ENCODE measurements at regions of chr5 and their contacts with region 1.

Region 1: DNA sequence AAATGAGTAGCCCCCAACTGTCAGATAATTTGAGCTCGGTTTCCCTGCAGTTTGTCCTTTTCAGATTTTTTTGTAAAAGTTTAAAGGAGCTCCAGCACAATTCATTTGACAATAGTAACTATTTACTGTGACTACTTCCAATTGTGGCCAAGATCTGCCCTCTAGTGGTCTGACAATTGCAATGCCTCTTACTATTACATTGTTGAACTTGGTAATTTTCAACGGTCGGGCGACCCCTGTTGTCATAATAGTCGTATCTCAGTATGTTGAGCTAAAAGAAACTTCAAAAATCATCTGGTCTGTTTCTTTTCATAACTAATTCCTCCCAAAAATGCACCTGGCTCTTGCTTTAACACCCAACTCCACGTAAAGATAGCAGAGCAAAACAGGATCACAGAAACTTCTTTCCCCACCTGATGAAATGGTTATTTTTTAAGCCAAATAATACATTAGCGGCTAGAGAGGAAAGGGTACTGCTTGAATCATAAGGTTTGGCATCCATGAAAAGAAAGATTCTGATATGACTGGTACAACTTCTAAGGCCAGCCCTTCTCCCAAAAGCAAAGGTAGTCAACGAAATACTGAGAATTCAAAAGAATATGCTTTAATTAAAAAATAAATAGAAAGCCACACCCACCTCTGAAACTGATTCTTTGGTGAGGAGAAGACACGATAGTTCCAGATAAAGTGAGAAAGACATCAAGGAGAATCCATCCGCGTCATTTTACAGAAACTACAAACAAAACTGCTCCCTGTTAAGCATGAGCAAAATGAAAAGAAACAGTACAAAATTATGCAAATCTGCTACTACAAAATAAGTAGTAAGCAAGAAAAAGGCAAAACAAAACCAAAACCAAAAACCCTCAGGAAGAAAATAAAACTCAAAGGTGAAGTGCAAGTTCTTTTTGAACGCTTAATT is 76.9 kb upstream of the HTR4 start:
- DNase-seq: no peak
- ATAC-seq: peak; percentile 96
- H3K4me3 Mint-ChIP-seq: peak overlapping the region; percentile 72
- H3K27ac Mint-ChIP-seq: peak overlapping the region; percentile 59
- H3K4me1 Mint-ChIP-seq: peaks cover 8% of the 10 kb centered on the region
- H3K27me3 Mint-ChIP-seq: peaks cover 5% of the 10 kb centered on the region
- CTCF ChIP-seq: peak; percentile 31

Region 2: DNA sequence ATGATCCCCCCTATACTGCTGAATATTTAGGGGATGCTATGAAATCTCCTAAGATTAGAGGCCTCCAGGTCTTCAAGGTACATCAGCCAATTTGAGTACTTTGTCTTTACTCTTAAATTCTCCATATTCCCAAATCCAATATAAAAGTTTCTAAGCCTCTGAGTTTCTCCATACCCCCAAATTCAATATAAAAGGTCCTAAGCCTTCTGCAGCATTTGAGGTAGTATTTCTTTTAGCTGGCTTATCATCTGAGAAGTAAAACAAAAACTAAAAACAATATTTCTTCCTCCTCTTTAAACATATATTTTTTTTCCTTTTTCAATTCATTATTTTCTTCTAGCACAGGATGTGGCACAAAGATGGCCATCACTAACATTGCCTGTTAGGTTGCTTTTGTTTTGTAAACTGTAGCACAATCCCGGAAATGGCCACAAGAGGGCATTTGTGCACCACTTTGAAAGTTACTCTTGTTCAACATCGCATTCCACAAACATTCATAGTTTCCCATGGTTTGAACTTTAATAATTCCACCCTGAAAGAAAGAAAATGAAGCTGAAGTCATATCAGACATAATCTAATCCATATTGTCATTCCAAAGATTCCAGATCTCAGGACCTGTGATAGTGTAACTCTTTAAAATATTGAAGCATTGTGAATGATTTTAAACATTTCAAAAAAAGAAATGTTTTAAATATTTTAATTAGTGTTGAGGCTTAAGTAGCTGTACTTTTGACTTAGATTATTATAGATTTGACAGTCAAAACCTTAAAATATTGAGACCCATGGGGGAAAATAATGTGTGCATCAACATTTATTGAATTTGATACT is 873.7 kb before region 1 on chr5:
- CTCF ChIA-PET with region 1: no interaction called
- POLR2A ChIA-PET with region 1: no interaction called
- intact Hi-C with region 1: loop called (anchors 2 kb)
- DNase-seq: no peak
- ATAC-seq: no peak
- H3K4me3 Mint-ChIP-seq: no peak overlapping the region
- H3K27ac Mint-ChIP-seq: no peak overlapping the region
- H3K4me1 Mint-ChIP-seq: no peaks in the 10 kb centered on the region
- H3K27me3 Mint-ChIP-seq: no peaks in the 10 kb centered on the region
- CTCF ChIP-seq: peak; percentile 61

Region 3: GRCh38 chr5:148237785-148238184 is 493.4 kb before region 1 on chr5:
- CTCF ChIA-PET with region 1: no interaction called
- POLR2A ChIA-PET with region 1: no interaction called
- intact Hi-C with region 1: no loop called
- DNase-seq: no peak
- ATAC-seq: no peak
- H3K4me3 Mint-ChIP-seq: no peak overlapping the region
- H3K27ac Mint-ChIP-seq: no peak overlapping the region
- H3K4me1 Mint-ChIP-seq: no peaks in the 10 kb centered on the region
- H3K27me3 Mint-ChIP-seq: no peaks in the 10 kb centered on the region
- CTCF ChIP-seq: no peak

Region 4: DNA sequence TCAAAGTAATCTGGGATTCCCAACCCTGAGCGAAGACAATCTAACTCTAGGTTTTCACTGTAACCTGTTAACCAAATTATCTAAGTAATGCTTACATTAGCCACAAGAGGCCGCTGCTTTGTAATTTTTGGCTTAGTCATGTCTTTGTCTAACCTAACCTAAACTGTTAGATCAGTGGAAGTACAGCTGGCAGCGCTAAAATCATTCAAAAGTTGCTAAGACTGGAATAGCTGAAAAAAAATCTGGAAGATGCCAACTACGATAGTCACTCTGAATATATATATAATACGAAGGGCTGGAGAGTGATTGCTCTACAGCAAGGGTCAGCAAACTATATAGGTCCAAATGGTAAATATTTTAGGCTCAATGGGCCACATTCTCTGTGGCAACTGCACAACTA is 287.2 kb before region 1 on chr5:
- CTCF ChIA-PET with region 1: interaction called, 7 read pairs
- POLR2A ChIA-PET with region 1: no interaction called
- intact Hi-C with region 1: loop called (anchors 1 kb)
- DNase-seq: no peak
- ATAC-seq: peak; percentile 67
- H3K4me3 Mint-ChIP-seq: no peak overlapping the region
- H3K27ac Mint-ChIP-seq: no peak overlapping the region
- H3K4me1 Mint-ChIP-seq: no peaks in the 10 kb centered on the region
- H3K27me3 Mint-ChIP-seq: no peaks in the 10 kb centered on the region
- CTCF ChIP-seq: no peak

Region 5: GRCh38 chr5:148776780-148777179 is 45.6 kb after region 1 on chr5:
- CTCF ChIA-PET with region 1: no interaction called
- POLR2A ChIA-PET with region 1: no interaction called
- intact Hi-C with region 1: no loop called
- DNase-seq: no peak
- ATAC-seq: peak; percentile 54
- H3K4me3 Mint-ChIP-seq: no peak overlapping the region
- H3K27ac Mint-ChIP-seq: no peak overlapping the region
- H3K4me1 Mint-ChIP-seq: peaks cover 14% of the 10 kb centered on the region
- H3K27me3 Mint-ChIP-seq: peaks cover 2% of the 10 kb centered on the region
- CTCF ChIP-seq: no peak

Region 6: GRCh38 chr5:148991606-148992005 is 260.4 kb after region 1 on chr5:
- CTCF ChIA-PET with region 1: interaction called, 118 read pairs
- POLR2A ChIA-PET with region 1: no interaction called
- intact Hi-C with region 1: no loop called
- DNase-seq: no peak
- ATAC-seq: no peak
- H3K4me3 Mint-ChIP-seq: no peak overlapping the region
- H3K27ac Mint-ChIP-seq: no peak overlapping the region
- H3K4me1 Mint-ChIP-seq: no peaks in the 10 kb centered on the region
- H3K27me3 Mint-ChIP-seq: peaks cover 20% of the 10 kb centered on the region
- CTCF ChIP-seq: no peak

Region 7: DNA sequence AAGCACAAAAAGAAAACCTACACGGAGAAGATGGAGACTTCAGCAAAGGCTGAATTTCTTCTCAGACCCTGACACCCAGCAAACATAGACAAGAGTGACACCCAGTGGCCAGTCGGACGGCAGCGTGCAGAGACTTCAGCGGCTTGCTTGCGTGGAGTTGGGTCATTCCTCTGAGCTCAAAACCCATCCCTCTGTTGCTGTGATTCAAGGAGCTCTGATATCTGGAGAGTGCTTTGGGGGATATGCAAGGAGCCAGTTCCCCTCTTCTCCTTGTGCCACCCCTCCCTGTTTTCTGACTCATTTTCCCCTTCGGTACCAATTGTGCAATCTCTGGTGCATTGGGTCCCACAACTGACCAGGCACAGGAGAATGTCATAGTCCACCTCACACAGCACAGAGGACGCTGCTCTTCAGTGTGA is 304.2 kb after region 1 on chr5:
- CTCF ChIA-PET with region 1: interaction called, 275 read pairs
- POLR2A ChIA-PET with region 1: no interaction called
- intact Hi-C with region 1: loop called (anchors 1 kb)
- DNase-seq: peak; percentile 30
- ATAC-seq: peak; percentile 79
- H3K4me3 Mint-ChIP-seq: no peak overlapping the region
- H3K27ac Mint-ChIP-seq: no peak overlapping the region
- H3K4me1 Mint-ChIP-seq: no peaks in the 10 kb centered on the region
- H3K27me3 Mint-ChIP-seq: peaks cover 16% of the 10 kb centered on the region
- CTCF ChIP-seq: no peak

Region 8: DNA sequence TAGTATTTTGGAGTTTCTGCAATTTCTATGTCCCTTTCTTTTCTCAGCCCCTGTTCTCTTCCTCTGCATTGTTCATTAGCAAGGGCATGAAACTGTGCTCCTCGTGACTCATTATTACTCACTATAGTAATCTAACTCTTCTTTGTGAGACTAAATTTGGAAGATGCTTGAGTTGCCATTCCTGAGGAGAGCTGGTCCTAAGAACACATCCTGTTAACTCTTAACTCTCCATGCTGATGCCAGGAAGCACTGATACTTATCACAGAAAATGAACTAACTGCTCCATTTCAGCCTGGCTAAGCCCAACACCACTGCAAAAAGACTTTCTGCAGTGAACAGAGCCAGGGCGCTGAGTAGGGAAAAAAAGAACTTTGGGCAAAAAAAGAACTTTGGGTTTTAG is 830.6 kb after region 1 on chr5:
- CTCF ChIA-PET with region 1: no interaction called
- POLR2A ChIA-PET with region 1: no interaction called
- intact Hi-C with region 1: loop called (anchors 1 kb)
- DNase-seq: no peak
- ATAC-seq: no peak
- H3K4me3 Mint-ChIP-seq: no peak overlapping the region
- H3K27ac Mint-ChIP-seq: no peak overlapping the region
- H3K4me1 Mint-ChIP-seq: no peaks in the 10 kb centered on the region
- H3K27me3 Mint-ChIP-seq: no peaks in the 10 kb centered on the region
- CTCF ChIP-seq: no peak

Measured in activated B cell treated with CpG ODN at 0.5 μM for 24 hours (primary cell).